Mammary epithelial cell (primary cell): ENCODE measurements at regions of chr11 and their contacts with region 1.

Region 1: DNA sequence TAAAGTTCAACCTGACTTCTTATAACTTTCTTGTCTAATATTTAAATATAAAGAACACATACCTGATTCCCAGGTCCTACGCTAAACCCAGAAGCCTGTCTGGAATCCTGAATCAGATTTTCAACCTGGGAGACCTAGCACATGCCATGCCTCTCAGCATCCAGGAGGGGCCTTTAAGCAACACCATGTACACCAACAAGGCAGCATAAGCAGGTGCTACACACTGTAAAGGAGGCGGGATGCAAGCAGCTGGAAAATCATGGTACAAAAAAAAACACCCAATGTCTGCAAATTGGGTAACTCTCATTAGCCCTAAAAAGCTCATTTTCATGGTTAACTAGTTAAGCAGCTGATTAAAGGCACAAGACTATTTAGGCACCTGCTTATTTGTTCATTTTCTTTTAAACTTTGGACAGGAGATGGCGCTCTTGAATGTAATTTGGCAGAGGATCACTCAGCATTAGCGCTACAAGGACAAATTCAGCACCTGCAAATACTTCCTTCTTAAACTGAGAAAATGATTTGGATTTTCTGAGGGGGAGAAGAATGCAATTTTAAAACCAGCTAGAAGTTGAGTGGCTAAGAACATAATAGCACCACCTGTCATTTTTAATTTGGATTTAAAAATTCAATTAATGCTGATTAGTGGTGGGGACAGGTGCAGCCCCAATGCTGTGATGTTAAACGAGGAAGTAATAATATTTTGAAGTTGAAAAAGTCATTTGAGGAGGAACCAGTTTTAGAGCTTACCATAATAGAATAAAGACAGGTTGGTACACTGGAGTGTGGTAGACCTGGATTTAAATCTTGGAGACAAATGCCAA is 104.0 kb downstream of the FAR1 start:
- DNase-seq: peak; percentile 58
- H3K4me3 ChIP-seq: no peak overlapping the region
- H3K27ac ChIP-seq: no peak overlapping the region
- H3K4me1 ChIP-seq: no peaks in the 10 kb centered on the region
- H3K27me3 ChIP-seq: no peaks in the 10 kb centered on the region
- CTCF ChIP-seq: peak; percentile 47 to 60

Region 2: DNA sequence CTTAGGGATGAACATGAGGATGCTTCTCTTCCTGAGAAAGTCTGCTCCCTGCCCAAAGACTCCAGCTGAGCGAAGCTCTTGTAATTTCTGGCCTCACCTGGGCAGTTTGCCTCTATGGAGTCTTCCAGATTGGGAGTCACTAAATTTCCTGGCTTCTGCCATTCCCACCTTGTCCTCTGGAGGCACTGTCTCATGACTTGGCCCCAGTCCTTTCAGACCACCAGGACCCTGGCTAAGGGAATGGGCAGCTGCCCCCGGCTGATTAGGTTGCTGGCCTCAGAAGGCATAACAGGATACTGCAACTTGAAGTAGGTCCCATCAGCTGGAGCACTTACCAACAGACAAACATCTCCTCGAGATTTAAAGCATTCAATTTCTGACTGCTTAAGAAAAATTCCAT is 62.0 kb after region 1 on chr11:
- CTCF ChIA-PET with region 1: no interaction called
- dilution Hi-C with region 1: no loop called
- in situ Hi-C with region 1: no loop called
- intact Hi-C with region 1: no loop called
- DNase-seq: no peak
- H3K4me3 ChIP-seq: no peak overlapping the region
- H3K27ac ChIP-seq: no peak overlapping the region
- H3K4me1 ChIP-seq: peaks cover 27% of the 10 kb centered on the region
- H3K27me3 ChIP-seq: no peaks in the 10 kb centered on the region
- CTCF ChIP-seq: peak; percentile 39 to 43

Region 3: DNA sequence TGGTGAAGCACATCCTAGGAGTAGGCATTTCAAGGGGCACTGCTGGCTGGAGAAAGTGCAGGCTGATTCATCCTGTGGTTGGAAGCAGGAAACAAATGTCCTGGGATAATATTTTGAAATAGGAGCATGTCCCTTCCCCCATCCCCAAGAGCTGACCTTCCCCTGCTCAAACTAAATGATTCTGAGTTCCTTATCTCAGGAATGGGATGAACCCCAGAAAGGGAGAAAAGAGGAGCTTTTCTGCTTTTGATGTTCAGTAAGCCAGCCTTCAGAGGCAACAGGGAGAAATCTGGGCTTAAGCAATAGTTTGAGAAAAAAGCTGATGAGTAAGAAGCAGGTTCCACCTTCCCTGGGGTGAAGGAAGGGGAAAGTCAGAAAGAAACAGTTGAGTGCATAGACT is 170.5 kb after region 1 on chr11:
- CTCF ChIA-PET with region 1: interaction called, 4 read pairs
- dilution Hi-C with region 1: no loop called
- in situ Hi-C with region 1: loop called in 1 of 2 experiments (anchors 10 kb)
- intact Hi-C with region 1: loop called (anchors 5 kb)
- DNase-seq: peak; percentile 71
- H3K4me3 ChIP-seq: no peak overlapping the region
- H3K27ac ChIP-seq: peak overlapping the region; percentile 9
- H3K4me1 ChIP-seq: peaks cover 47% of the 10 kb centered on the region
- H3K27me3 ChIP-seq: no peaks in the 10 kb centered on the region
- CTCF ChIP-seq: no peak

Region 4: DNA sequence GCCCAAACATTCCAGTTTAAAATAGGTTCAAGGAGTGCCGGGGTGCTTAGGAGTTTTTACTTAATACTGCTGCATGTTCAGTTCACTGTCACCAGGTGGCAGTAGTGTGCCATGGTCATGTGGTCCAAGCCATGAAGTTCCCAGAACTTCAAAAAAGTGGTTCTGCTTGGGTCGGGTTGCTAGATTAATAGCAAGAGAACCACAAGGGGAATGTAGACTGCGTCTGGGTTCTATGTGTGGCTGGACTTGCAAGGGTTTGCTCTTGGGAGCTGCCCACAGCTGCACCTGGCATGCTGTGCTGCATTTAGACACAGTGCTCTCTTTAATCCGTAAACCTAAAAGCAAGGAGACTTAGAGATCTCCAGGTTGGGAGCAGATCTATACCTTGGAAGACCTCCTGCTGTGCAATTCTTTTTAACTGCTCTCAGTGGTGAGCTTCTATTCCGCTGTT is 183.6 kb after region 1 on chr11:
- CTCF ChIA-PET with region 1: no interaction called
- dilution Hi-C with region 1: no loop called
- in situ Hi-C with region 1: loop called in 1 of 2 experiments (anchors 10 kb)
- intact Hi-C with region 1: no loop called
- DNase-seq: no peak
- H3K4me3 ChIP-seq: no peak overlapping the region
- H3K27ac ChIP-seq: no peak overlapping the region
- H3K4me1 ChIP-seq: no peaks in the 10 kb centered on the region
- H3K27me3 ChIP-seq: peaks cover 4% of the 10 kb centered on the region
- CTCF ChIP-seq: peak; percentile 87 to 88

Region 5: DNA sequence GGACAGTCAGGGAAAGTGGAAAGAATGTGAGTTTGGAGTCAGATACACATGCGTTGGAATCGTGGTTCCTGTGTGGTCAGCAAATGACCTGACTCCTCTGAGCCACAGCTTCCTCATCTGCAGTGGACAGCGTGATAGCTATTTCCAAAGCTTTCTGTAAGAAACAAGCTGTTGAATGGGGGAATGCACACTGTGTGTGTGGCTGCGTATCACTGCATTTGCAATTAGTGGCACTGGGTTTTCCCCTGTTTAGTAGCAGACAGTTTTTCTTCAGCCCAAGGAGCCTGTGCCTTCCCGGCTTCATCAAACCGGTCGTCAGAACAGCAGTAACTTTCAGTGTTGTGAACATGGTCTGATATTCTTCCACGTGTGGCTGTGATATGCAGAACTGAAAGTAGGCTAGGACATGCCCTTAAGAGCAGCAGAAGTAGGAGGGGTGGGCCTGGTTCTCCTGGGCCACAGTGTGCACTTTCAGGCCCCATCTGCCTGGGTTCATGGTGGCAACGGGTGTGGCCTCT is 465.1 kb after region 1 on chr11:
- CTCF ChIA-PET with region 1: no interaction called
- dilution Hi-C with region 1: loop called (anchors 10 kb)
- in situ Hi-C with region 1: no loop called
- intact Hi-C with region 1: no loop called
- DNase-seq: no peak
- H3K4me3 ChIP-seq: no peak overlapping the region
- H3K27ac ChIP-seq: no peak overlapping the region
- H3K4me1 ChIP-seq: no peaks in the 10 kb centered on the region
- H3K27me3 ChIP-seq: no peaks in the 10 kb centered on the region
- CTCF ChIP-seq: no peak